Caco-2 (cell line): ENCODE measurements at regions of chr12 and their contacts with region 1.

Region 1: GRCh38 chr12:85076688-85077430 is 40.7 kb downstream of the LRRIQ1 start:
- DNase-seq: peak in 1 of 2 experiments; percentile 17
- H3K4me3 ChIP-seq: no peak overlapping the region
- H3K4me3 Mint-ChIP-seq: no peak overlapping the region
- H3K27ac Mint-ChIP-seq: no peak overlapping the region
- H3K4me1 ChIP-seq: no peaks in the 10 kb centered on the region
- H3K4me1 Mint-ChIP-seq: no peaks in the 10 kb centered on the region
- H3K27me3 ChIP-seq: no peaks in the 10 kb centered on the region
- H3K27me3 Mint-ChIP-seq: no peaks in the 10 kb centered on the region
- CTCF ChIP-seq: peak; percentile 39 to 50

Region 2: DNA sequence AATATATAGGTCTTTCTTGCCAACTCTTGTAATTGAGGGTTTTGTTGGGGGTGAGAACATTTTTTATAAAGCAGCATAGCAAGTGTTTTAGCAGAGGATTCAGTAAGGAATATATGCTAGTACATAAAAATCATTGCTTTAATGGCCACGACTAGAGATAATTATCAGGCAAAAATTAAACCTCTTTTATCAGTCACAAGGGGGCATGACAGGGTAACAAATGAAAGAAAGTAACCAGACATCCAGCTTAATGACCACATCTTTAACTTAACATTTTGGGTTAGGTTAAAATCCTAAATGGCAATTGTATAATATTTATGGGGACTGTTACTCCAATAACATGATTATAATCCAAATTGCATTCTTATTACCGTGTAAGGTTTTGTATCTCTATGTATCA is 78.9 kb after region 1 on chr12:
- CTCF ChIA-PET with region 1: no interaction called
- POLR2A ChIA-PET with region 1: no interaction called
- intact Hi-C with region 1: loop called (anchors 5 kb)
- DNase-seq: no peak
- H3K4me3 ChIP-seq: no peak overlapping the region
- H3K4me3 Mint-ChIP-seq: no peak overlapping the region
- H3K27ac Mint-ChIP-seq: no peak overlapping the region
- H3K4me1 ChIP-seq: no peaks in the 10 kb centered on the region
- H3K4me1 Mint-ChIP-seq: no peaks in the 10 kb centered on the region
- H3K27me3 ChIP-seq: no peaks in the 10 kb centered on the region
- H3K27me3 Mint-ChIP-seq: no peaks in the 10 kb centered on the region
- CTCF ChIP-seq: peak; percentile 11 to 16

Region 3: GRCh38 chr12:85280165-85280983 is 203.5 kb after region 1 on chr12 and contains the start of gene ALX1:
- CTCF ChIA-PET with region 1: no interaction called
- POLR2A ChIA-PET with region 1: no interaction called
- intact Hi-C with region 1: loop called (anchors 10 kb)
- DNase-seq: peak; percentile 37 to 45
- H3K4me3 ChIP-seq: peak within 1 kb of the TSS; percentile 48
- H3K4me3 Mint-ChIP-seq: peak within 1 kb of the TSS; percentile 73
- H3K27ac Mint-ChIP-seq: no peak within 1 kb of the TSS
- H3K4me1 ChIP-seq: 0 out of 2 replicates have a peak, but pooled peaks cover 8% of the 10 kb centered on the region
- H3K4me1 Mint-ChIP-seq: no peaks in the 10 kb centered on the region
- H3K27me3 ChIP-seq: no peaks in the 10 kb centered on the region
- H3K27me3 Mint-ChIP-seq: peaks cover 10% of the 10 kb centered on the region
- CTCF ChIP-seq: no peak
- total RNA-seq, gene ALX1: not detected in 2 replicates

Region 4: DNA sequence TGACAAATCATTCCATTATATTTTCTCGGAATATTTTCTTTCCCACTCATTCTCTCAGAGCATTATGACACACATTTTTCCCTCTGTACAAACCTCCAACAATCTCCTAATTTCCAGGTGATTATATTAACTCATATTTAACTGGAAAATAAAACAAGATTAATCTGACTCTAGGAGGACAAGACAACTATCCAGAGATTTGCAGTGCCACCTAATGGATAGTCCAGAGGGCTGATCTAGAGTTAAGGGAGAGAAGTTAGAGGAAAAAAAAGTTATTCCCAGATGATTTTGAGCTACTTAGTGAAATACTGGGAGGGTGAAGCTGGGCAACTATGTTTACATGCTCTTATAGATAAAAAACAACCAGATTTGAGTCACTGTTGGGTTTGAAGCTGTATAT is 364.9 kb after region 1 on chr12:
- CTCF ChIA-PET with region 1: no interaction called
- POLR2A ChIA-PET with region 1: no interaction called
- intact Hi-C with region 1: loop called (anchors 1 kb)
- DNase-seq: no peak
- H3K4me3 ChIP-seq: no peak overlapping the region
- H3K4me3 Mint-ChIP-seq: no peak overlapping the region
- H3K27ac Mint-ChIP-seq: peak overlapping the region; percentile 39
- H3K4me1 ChIP-seq: peaks cover 48% of the 10 kb centered on the region
- H3K4me1 Mint-ChIP-seq: peaks cover 51% of the 10 kb centered on the region
- H3K27me3 ChIP-seq: no peaks in the 10 kb centered on the region
- H3K27me3 Mint-ChIP-seq: no peaks in the 10 kb centered on the region
- CTCF ChIP-seq: peak in 1 of 2 experiments; percentile 32

Region 5: GRCh38 chr12:85448548-85449139 is 371.8 kb after region 1 on chr12:
- CTCF ChIA-PET with region 1: interaction called, 3 read pairs
- POLR2A ChIA-PET with region 1: no interaction called
- intact Hi-C with region 1: loop called (anchors 1 kb)
- DNase-seq: no peak
- H3K4me3 ChIP-seq: no peak overlapping the region
- H3K4me3 Mint-ChIP-seq: no peak overlapping the region
- H3K27ac Mint-ChIP-seq: no peak overlapping the region
- H3K4me1 ChIP-seq: peaks cover 17% of the 10 kb centered on the region
- H3K4me1 Mint-ChIP-seq: peaks cover 32% of the 10 kb centered on the region
- H3K27me3 ChIP-seq: no peaks in the 10 kb centered on the region
- H3K27me3 Mint-ChIP-seq: no peaks in the 10 kb centered on the region
- CTCF ChIP-seq: peak; percentile 28 to 64

Region 6: DNA sequence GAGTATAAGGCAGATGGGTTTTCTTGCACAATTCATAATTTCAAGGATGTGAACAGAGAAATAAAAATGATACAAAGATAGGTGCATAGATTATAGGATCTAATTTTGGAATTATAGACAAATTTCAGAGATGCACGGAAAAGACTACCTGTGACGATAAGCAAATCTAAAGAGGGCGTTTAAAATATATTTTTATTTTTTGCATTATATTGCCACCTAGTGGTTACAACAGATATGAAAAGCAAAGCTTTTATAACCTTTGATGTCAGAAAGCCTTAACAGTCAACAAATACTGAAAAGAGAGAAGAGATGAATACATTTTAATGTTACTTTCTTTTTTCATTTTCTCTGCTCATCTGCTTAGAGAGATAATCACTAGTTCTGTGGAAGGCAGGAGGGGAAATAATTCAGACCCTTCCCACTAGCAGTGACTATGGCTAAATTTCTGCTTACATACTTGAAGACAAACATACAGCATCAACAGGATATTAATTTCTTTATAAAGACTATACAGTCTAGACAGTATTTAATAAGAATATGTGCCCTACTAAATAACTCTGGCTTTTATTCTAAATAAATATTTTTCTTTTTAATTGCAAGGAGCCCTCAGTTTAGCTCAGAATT is 843.6 kb after region 1 on chr12:
- CTCF ChIA-PET with region 1: no interaction called
- POLR2A ChIA-PET with region 1: no interaction called
- intact Hi-C with region 1: loop called (anchors 2 kb)
- DNase-seq: no peak
- H3K4me3 ChIP-seq: no peak overlapping the region
- H3K4me3 Mint-ChIP-seq: no peak overlapping the region
- H3K27ac Mint-ChIP-seq: no peak overlapping the region
- H3K4me1 ChIP-seq: no peaks in the 10 kb centered on the region
- H3K4me1 Mint-ChIP-seq: no peaks in the 10 kb centered on the region
- H3K27me3 ChIP-seq: no peaks in the 10 kb centered on the region
- H3K27me3 Mint-ChIP-seq: no peaks in the 10 kb centered on the region
- CTCF ChIP-seq: peak; percentile 36 to 61